Activated CD4-positive, alpha-beta T cell treated with anti-CD3 and anti-CD28 coated beads, Interleukin-2, amount 10 ng/mL, durations not matched to agents 7 days and 5 days (primary cell): ENCODE measurements at regions of chr17 and their contacts with region 1.

Region 1: DNA sequence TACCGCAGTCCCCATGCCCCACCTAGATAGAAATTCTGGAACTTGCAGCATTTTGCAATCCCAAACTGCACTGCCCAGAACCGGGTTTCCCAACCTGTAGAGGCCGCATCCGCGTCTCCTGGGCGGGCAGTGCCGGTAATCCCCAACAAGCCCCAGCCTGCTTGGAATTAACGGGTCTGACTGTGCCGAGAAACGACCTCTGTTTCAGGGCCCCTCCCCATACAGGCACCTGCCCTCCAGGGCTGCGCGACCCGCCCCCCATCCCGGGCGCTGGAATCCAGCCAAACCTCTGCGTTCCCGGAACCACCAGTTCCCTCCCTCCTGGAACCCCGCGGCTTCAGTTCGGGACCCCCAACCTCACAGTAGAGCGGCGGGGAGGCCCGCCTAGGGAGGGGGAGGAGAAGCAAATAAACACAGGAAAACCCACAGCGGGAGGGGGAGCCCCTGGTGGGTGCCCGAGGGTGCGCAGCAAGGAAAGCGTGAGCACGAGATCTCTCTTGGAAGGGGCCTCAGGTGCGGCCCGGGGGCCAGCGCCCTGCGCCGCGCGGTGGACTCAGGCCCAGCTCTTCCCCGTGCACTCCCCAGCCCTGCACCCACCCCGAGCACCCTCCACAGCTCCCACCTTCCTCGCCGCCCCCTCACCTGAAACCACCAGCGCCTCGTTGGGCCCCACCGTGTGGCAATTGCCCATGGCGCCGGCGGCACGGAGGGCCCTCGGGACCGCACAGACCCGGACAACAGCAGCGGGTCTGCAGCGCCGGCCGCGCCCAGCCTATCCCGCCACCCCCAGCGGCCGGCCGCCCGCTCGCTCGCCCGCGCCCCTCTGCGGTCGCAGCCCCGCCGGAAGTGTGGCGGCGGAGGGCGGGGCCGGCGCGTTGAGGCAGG is at the start of gene FLOT2:
- DNase-seq: peak; percentile 68
- H3K4me3 Mint-ChIP-seq: peak within 1 kb of the TSS; percentile 98
- H3K27ac Mint-ChIP-seq: peak within 1 kb of the TSS; percentile 97
- H3K4me1 Mint-ChIP-seq: peaks cover 67% of the 10 kb centered on the region
- H3K27me3 Mint-ChIP-seq: no peaks in the 10 kb centered on the region
- total RNA-seq, gene FLOT2: 200 to 212 TPM

Region 2: DNA sequence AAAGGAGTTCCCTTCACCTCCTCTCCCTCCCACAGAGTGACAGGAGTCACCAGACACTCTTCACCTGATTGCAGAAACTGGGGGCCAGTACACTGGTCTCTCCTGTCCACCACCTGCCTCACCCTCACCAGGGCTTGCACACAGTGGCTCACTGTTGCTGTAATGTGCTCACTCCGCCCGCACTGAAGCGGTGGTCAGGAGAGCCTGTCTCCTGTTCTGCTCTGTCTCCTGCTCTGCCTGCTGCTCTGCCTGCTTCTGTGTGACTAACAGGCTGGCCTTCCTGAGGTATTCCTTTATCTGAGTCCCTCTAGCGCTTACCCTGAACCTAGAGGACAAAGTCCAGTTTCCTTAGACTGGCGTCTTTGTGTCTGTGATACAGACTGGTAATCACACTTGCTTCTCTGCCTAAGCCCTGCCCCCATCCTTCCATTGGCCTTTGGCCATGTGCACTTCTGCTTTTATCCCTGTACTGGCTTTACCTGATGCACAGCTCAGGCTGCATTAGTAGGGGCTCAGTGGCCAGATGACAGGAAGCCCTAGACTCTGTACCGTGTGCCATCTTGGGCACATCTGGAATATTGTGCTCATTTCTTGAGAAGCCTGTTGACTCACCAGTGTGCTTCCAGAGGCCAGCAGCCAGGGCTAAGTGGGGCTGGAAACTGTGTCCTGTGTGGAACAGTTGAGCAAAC is 198.7 kb before region 1 on chr17:
- CTCF ChIA-PET with region 1: no interaction called
- POLR2A ChIA-PET with region 1: no interaction called
- DNase-seq: no peak
- H3K4me3 Mint-ChIP-seq: no peak overlapping the region
- H3K27ac Mint-ChIP-seq: no peak overlapping the region
- H3K4me1 Mint-ChIP-seq: no peaks in the 10 kb centered on the region
- H3K27me3 Mint-ChIP-seq: no peaks in the 10 kb centered on the region

Region 3: GRCh38 chr17:28763804-28764266 is 133.3 kb before region 1 on chr17:
- CTCF ChIA-PET with region 1: interaction called, 11 read pairs
- POLR2A ChIA-PET with region 1: no interaction called
- DNase-seq: peak; percentile 86
- H3K4me3 Mint-ChIP-seq: no peak overlapping the region
- H3K27ac Mint-ChIP-seq: no peak overlapping the region
- H3K4me1 Mint-ChIP-seq: peaks cover 8% of the 10 kb centered on the region
- H3K27me3 Mint-ChIP-seq: no peaks in the 10 kb centered on the region